Naive thymus-derived CD4-positive, alpha-beta T cell (primary cell): ENCODE measurements at regions of chr16 and their contacts with region 1.

Region 1: DNA sequence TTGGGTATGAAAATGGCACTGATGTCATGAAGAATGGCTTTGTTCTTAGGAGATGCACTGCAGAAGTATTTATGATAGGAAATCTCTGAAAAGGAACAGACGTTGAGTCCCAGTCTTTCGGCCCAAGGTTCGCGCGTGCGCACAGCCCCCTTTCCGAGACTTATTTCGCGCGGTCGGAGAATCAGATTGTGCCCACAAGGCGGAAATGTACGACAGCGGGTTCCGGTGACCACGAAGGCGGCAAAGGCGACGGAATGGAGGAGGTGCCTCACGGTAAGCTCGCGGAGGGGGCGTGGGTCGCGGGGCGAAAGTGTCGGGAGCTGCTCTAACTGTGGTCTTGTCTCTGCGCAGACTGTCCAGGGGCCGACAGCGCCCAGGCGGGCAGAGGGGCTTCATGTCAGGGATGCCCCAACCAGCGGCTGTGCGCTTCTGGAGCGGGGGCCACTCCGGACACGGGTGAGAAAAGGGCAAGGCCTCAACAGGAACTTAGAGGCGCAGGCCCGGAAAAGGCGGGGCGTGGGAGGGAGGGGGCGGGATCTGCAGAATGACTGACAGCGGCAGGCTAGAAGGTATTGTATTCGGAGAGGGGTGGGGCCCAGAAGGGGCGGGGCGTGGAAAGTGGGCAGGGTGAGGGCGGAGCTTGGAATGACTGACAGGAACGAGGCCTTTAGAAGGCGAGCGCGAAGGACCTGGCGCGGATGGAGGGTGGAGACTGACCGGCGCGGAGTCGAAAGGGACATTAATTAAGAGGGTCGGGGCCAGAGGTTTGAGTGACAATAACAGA is at the start of gene NUBP1:
- DNase-seq: peak; percentile 97 to 99 (median 99)
- ATAC-seq: peak; percentile 98
- H3K4me3 ChIP-seq: peak within 1 kb of the TSS; percentile 74
- H3K4me3 Mint-ChIP-seq: peak within 1 kb of the TSS; percentile 84 to 99 (median 95)
- H3K27ac ChIP-seq: peak within 1 kb of the TSS; percentile 92
- H3K27ac Mint-ChIP-seq: peak within 1 kb of the TSS; percentile 98 to 100 (median 99)
- H3K4me1 ChIP-seq: peaks cover 7 to 10% of the 10 kb centered on the region in 2 donors
- H3K4me1 Mint-ChIP-seq: peaks cover 15 to 48% (median 27%) of the 10 kb centered on the region in 7 donors
- H3K27me3 ChIP-seq: no peaks in the 10 kb centered on the region
- H3K27me3 Mint-ChIP-seq: peaks cover 0 to 2% (median 0%) of the 10 kb centered on the region in 5 donors
- total RNA-seq, gene NUBP1: 24.0 to 30.0 (median 25.5) TPM

Region 2: DNA sequence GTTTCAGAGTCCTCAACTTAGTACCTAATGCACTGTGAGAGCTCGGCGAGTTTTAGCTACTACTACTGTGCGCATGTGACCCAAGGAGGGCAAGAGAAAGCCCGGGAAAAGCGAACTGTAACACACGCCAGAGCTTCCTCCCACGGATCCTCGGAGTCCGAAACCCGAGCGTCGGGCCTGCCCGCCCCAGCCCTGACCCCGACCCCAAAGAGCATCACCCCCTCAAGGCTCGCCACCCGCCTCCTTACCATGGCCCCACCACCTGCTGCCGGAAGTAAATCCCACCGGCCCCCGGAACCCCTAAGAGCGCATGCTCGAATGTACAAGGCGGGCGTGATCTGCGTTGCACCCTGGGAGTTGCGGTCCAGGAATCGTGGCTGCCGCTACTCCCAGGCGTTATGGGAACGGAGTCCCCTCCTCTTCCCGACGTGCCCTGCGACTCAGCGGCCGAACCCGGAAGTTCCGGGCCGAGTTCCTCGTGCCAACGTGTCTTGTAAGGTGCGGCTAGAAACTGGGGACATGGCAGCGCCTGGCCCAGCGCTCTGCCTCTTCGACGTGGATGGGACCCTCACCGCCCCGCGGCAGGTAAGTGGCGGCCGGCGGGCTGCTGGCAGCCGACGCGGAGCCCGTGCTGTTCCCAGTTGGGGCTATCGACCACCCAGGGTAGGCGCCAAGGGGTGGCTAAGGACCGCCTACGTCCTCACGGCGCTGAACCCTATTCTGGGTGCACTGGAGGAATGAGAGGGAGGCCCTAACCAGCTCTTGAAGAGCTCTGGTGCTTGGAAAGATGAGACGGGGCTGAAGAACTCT is 1946.2 kb before region 1 on chr16 and contains the starts of genes PMM2 and TMEM186:
- CTCF ChIA-PET with region 1: no interaction called
- POLR2A ChIA-PET with region 1: no interaction called
- intact Hi-C with region 1: loop called in 1 of 2 experiments (anchors 1 kb)
- DNase-seq: peak; percentile 78 to 96 (median 93)
- ATAC-seq: peak; percentile 99
- H3K4me3 ChIP-seq: peak within 1 kb of the TSS; percentile 90
- H3K4me3 Mint-ChIP-seq: peak within 1 kb of the TSS; percentile 91 to 99 (median 96)
- H3K27ac ChIP-seq: peak within 1 kb of the TSS; percentile 86
- H3K27ac Mint-ChIP-seq: peak within 1 kb of the TSS; percentile 87 to 95 (median 92)
- H3K4me1 ChIP-seq: peaks cover 25 to 32% of the 10 kb centered on the region in 2 donors
- H3K4me1 Mint-ChIP-seq: peaks cover 19 to 71% (median 49%) of the 10 kb centered on the region in 7 donors
- H3K27me3 ChIP-seq: no peaks in the 10 kb centered on the region
- H3K27me3 Mint-ChIP-seq: no peaks in the 10 kb centered on the region
- total RNA-seq, gene PMM2: 32.2 to 52.8 (median 41.7) TPM
- total RNA-seq, gene TMEM186: 3.2 to 16.3 (median 11.3) TPM

Region 3: GRCh38 chr16:8963825-8964441 is 1779.9 kb before region 1 on chr16 and contains the start of gene USP7:
- CTCF ChIA-PET with region 1: no interaction called
- POLR2A ChIA-PET with region 1: interaction called, 3 read pairs
- intact Hi-C with region 1: loop called in 1 of 2 experiments (anchors 2 kb)
- DNase-seq: peak; percentile 86 to 94 (median 92)
- ATAC-seq: peak; percentile 94
- H3K4me3 ChIP-seq: peak within 1 kb of the TSS; percentile 77
- H3K4me3 Mint-ChIP-seq: peak within 1 kb of the TSS; percentile 90 to 98 (median 95)
- H3K27ac ChIP-seq: peak within 1 kb of the TSS; percentile 85
- H3K27ac Mint-ChIP-seq: peak within 1 kb of the TSS; percentile 80 to 97 (median 92)
- H3K4me1 ChIP-seq: peaks cover 30 to 34% of the 10 kb centered on the region in 2 donors
- H3K4me1 Mint-ChIP-seq: peaks cover 35 to 42% (median 40%) of the 10 kb centered on the region in 7 donors
- H3K27me3 ChIP-seq: no peaks in the 10 kb centered on the region
- H3K27me3 Mint-ChIP-seq: peaks cover 0 to 18% (median 0%) of the 10 kb centered on the region in 5 donors
- total RNA-seq, gene USP7: 175 to 261 (median 178) TPM

Region 4: GRCh38 chr16:10812312-10813098 is 68.7 kb after region 1 on chr16:
- CTCF ChIA-PET with region 1: no interaction called
- POLR2A ChIA-PET with region 1: no interaction called
- intact Hi-C with region 1: no loop called
- DNase-seq: no peak
- ATAC-seq: no peak
- H3K4me3 ChIP-seq: no peak overlapping the region
- H3K4me3 Mint-ChIP-seq: no peak overlapping the region
- H3K27ac ChIP-seq: no peak overlapping the region
- H3K27ac Mint-ChIP-seq: no peak overlapping the region
- H3K4me1 ChIP-seq: no peaks in the 10 kb centered on the region
- H3K4me1 Mint-ChIP-seq: peaks cover 0 to 2% (median 0%) of the 10 kb centered on the region in 7 donors
- H3K27me3 ChIP-seq: no peaks in the 10 kb centered on the region
- H3K27me3 Mint-ChIP-seq: peaks cover 0 to 20% (median 5%) of the 10 kb centered on the region in 5 donors

Region 5: GRCh38 chr16:10876799-10877341 is 133.1 kb after region 1 on chr16 and contains the start of gene CIITA:
- CTCF ChIA-PET with region 1: no interaction called
- POLR2A ChIA-PET with region 1: no interaction called
- intact Hi-C with region 1: loop called in 1 of 2 experiments (anchors 1 kb)
- DNase-seq: peak in 2 of 9 donors; percentile 20 to 34
- ATAC-seq: peak; percentile 88
- H3K4me3 ChIP-seq: peak within 1 kb of the TSS; percentile 47
- H3K4me3 Mint-ChIP-seq: peak within 1 kb of the TSS; percentile 63 to 95 (median 86)
- H3K27ac ChIP-seq: no peak within 1 kb of the TSS
- H3K27ac Mint-ChIP-seq: peak within 1 kb of the TSS in 1 of 9 donors; percentile 68
- H3K4me1 ChIP-seq: peaks cover 0 to 51% of the 10 kb centered on the region in 2 donors
- H3K4me1 Mint-ChIP-seq: peaks cover 27 to 77% (median 40%) of the 10 kb centered on the region in 7 donors
- H3K27me3 ChIP-seq: peaks cover 0 to 4% of the 10 kb centered on the region in 2 donors
- H3K27me3 Mint-ChIP-seq: peaks cover 52 to 78% (median 60%) of the 10 kb centered on the region in 5 donors
- total RNA-seq, gene CIITA: 1.0 to 72.1 (median 6.7) TPM

Region 6: DNA sequence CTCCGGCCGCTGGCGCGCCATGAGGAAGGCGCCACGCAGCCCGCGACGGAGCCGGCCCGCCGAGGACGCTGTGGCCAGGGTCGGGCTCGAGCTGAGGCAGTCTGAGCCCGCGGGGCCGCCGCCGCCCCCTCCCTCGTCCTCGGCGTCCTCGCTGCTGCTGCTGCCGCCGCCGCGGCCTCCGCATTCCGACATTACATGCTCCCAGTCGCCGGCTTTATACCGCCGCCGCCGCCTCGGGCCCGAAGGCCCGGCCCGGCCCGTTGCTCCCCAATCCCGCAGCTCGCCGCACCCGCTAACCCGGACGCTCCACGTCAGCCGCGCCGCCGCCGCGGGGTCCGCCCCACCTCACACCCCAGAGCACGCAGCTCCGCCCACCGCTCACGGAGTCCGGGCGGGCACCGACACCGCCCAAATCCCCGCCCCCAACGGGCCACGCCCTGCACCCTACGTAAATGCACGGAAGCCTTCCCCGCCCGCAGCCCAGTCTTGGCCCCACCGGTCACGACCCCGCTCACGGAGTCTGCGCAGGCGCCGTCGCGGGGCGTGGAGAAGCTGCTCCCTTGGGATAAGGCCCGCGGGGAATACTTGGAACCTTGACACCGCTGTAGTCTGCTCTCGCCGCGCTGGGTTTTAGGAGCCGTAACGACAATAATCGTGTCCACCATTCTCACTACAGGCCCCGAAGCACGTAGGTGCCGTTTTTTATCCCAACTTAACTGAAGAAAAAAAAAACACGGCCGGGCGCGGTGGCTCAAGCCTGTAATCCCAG is 998.9 kb after region 1 on chr16 and contains the start of gene TXNDC11:
- CTCF ChIA-PET with region 1: no interaction called
- POLR2A ChIA-PET with region 1: no interaction called
- intact Hi-C with region 1: loop called in 1 of 2 experiments (anchors 1 kb)
- DNase-seq: peak; percentile 98 to 100 (median 100)
- ATAC-seq: peak; percentile 98
- H3K4me3 ChIP-seq: peak within 1 kb of the TSS; percentile 92
- H3K4me3 Mint-ChIP-seq: peak within 1 kb of the TSS; percentile 91 to 98 (median 94)
- H3K27ac ChIP-seq: peak within 1 kb of the TSS; percentile 90
- H3K27ac Mint-ChIP-seq: peak within 1 kb of the TSS; percentile 91 to 99 (median 98)
- H3K4me1 ChIP-seq: peaks cover 26 to 28% of the 10 kb centered on the region in 2 donors
- H3K4me1 Mint-ChIP-seq: peaks cover 39 to 55% (median 51%) of the 10 kb centered on the region in 7 donors
- H3K27me3 ChIP-seq: no peaks in the 10 kb centered on the region
- H3K27me3 Mint-ChIP-seq: no peaks in the 10 kb centered on the region
- total RNA-seq, gene TXNDC11: 41.2 to 80.5 (median 55.1) TPM

Region 7: DNA sequence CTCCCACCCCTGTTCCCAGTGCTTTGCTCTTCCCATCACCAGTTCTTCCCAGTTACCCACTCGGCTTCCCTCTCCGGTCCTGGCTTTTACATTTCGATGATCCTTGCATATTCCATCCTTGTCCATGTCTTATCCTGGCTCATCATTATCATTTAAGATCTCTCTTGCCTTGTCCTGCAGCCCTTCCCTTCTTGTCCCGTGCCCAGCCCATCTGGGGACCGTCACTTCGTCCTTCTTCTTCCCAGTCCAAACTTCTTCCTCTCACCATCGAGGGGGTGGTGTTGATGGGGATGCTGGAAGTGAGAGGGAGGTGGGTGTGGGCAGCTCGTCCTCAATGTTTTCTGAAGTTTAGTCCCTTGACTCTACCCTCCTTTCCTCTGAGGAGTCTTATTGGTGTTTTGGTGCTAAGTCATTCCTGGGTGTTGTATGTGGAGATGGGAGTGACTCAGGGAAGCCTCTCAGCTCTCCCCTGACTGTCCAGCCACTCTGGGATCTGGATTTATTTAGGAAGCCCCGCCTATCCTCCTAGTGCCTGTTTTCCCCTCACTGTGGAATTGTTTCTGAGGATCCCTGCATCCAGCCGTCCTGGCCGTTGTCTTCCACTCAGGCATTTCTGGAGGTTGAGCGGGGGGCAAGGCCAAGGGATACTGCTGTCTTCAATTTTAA is 1233.7 kb after region 1 on chr16:
- CTCF ChIA-PET with region 1: no interaction called
- POLR2A ChIA-PET with region 1: no interaction called
- intact Hi-C with region 1: loop called in 1 of 2 experiments (anchors 5 kb)
- DNase-seq: no peak
- ATAC-seq: no peak
- H3K4me3 ChIP-seq: peak overlapping the region; percentile 71
- H3K4me3 Mint-ChIP-seq: peak overlapping the region; percentile 85 to 99 (median 94)
- H3K27ac ChIP-seq: peak overlapping the region; percentile 88
- H3K27ac Mint-ChIP-seq: peak overlapping the region; percentile 60 to 97 (median 93)
- H3K4me1 ChIP-seq: peaks cover 11 to 19% of the 10 kb centered on the region in 2 donors
- H3K4me1 Mint-ChIP-seq: peaks cover 33 to 55% (median 42%) of the 10 kb centered on the region in 7 donors
- H3K27me3 ChIP-seq: no peaks in the 10 kb centered on the region
- H3K27me3 Mint-ChIP-seq: no peaks in the 10 kb centered on the region